ENCODE measurements at regions of chr19 and their contacts with region 1.

Region 1: DNA sequence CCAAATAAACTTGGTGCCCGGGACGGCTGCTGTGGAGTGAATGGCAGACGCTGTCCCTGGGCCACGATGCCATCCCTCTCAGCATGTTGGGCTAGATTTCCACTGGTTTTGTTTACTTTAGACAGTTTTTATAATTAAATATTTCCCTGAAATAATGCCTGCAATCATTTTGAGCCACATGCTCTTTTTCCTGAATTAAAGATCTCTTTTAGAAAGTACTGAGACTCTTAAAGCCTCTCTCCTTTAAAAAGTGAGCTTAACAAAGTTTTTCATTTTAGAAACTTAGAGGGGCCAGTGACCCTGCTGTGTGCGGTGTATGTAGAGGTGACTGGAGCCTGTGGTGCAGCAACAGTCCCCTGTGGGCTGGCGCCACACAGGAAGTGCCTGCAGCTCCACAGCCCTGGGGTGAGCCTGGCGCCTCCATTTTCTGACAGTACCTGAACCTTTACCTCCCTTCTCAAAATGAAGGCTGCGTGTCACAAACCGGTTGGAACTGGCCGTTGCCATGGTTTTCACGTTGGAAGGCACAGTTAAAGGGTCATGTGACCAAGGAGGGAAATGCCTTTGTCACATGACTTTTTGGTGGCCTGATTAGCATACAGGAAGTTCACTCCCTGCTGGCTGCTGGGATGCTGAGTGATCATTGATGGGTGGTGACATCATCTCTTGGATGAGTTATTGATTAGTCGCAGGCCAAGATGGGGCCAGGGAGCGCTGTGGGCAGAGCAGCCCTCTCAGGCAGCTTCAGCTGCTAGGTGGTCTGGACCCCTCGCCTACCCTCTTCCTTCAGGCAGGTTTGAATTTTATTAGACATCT is 26.3 kb downstream of the TSSK6 start:
- DNase-seq: peak; percentile 87
- H3K4me3 ChIP-seq: no peak overlapping the region
- H3K27ac ChIP-seq: peak overlapping the region; percentile 38
- H3K4me1 ChIP-seq: peaks cover 37% of the 10 kb centered on the region
- H3K27me3 ChIP-seq: no peaks in the 10 kb centered on the region
- CTCF ChIP-seq: no peak

Region 2: GRCh38 chr19:19145684-19146608 is 343.1 kb before region 1 on chr19:
- CTCF ChIA-PET with region 1: no interaction called
- dilution Hi-C with region 1: no loop called
- in situ Hi-C with region 1: loop called in 1 of 2 experiments (anchors 25 kb)
- intact Hi-C with region 1: loop called (anchors 1 kb)
- DNase-seq: peak; percentile 42
- H3K4me3 ChIP-seq: peak overlapping the region in 2 of 3 experiments; percentile 20 to 29
- H3K27ac ChIP-seq: no peak overlapping the region
- H3K4me1 ChIP-seq: peaks cover 2% of the 10 kb centered on the region
- H3K27me3 ChIP-seq: no peaks in the 10 kb centered on the region
- CTCF ChIP-seq: peak; percentile 92 to 96

Region 3: DNA sequence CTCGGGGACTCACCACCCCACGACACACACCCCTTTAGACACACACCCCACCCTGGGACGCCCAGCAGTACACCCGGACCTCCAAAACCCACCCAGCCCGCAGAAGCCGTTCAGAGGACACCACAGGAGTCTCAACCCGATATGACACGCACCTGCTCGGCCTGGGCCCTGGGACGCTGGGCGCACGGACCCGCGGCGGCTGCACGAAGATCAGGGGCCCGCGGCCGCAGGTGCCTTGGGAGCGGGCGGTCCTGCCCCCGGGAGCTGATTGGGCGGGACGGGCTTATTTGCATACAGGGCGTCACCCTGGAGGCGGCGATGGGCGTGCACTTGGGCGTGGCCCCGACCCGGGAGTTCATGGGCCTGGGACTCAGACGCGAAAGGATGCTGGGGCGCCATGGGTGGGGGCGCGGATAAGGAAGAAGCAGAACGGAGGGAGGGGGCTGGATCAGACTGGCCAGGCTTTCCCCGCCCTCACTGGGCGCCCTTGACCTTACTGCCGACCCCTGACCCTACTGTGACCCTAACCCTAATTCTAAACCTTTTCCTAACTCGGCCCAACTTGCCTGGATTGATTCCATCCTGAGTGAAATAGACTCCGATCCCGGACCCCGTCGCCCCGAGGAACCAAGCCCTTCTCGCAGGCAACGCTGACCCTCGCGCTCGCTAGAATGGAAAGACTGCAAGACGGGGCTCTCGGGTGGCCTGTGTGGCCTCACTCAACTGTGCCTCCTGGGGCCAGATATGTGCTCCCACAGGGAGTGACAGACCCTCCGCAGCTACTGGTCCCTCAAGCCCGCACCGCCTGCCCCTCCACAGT is 318.8 kb before region 1 on chr19 and contains the start of gene MEF2B:
- CTCF ChIA-PET with region 1: no interaction called
- dilution Hi-C with region 1: no loop called
- in situ Hi-C with region 1: loop called in 1 of 2 experiments (anchors 25 kb)
- intact Hi-C with region 1: no loop called
- DNase-seq: peak; percentile 27
- H3K4me3 ChIP-seq: no peak within 1 kb of the TSS
- H3K27ac ChIP-seq: no peak within 1 kb of the TSS
- H3K4me1 ChIP-seq: peaks cover 3% of the 10 kb centered on the region
- H3K27me3 ChIP-seq: no peaks in the 10 kb centered on the region
- CTCF ChIP-seq: no peak
- total RNA-seq, gene MEF2B: 0.68 TPM in 1 of 2 donors, not detected in the other

Region 4: DNA sequence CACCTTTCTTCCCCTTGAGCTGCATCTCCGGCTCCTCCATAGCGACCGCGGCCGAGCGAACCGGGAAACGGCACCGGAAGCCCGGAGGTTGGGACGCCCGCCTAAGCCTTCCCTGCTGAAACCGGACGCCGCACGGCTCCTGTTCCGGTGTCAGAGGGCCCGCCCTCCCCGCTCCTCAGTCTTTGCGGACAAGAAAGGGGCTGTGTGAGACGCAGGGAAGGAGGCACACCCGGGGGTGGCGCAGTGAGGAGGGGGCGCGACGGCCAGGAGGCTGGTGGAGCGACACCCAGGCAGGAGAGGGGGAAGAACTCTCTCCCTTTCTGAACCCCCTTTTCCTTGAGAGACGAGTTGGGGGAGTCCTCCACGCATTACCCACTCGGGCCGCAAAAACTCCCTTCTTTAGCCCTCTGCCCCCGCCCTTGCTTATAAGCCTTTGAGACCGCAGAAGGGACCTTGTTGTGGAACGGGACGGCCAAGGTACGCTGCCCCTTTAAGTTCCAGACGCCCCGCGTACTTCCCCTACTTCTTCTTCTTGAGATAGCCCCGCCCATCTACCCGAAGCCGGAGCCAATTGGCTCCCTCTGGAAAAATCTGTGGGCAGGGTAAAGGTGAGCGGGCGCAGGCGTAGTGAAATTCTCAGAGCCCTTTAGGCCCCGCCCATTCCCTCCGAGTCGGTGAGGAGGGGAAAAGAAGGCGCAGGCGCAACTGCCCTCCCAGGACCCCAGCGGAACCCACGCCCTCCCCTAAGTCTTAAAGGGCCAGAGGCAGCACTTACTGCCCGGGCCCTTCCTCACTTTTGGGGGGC is 296.8 kb before region 1 on chr19 and contains the starts of genes BORCS8 and RFXANK:
- CTCF ChIA-PET with region 1: no interaction called
- dilution Hi-C with region 1: no loop called
- in situ Hi-C with region 1: no loop called
- intact Hi-C with region 1: loop called (anchors 5 kb)
- DNase-seq: peak; percentile 98
- H3K4me3 ChIP-seq: peak within 1 kb of the TSS; percentile 80 to 94 (median 83)
- H3K27ac ChIP-seq: peak within 1 kb of the TSS; percentile 91
- H3K4me1 ChIP-seq: peaks cover 19% of the 10 kb centered on the region
- H3K27me3 ChIP-seq: no peaks in the 10 kb centered on the region
- CTCF ChIP-seq: no peak
- total RNA-seq, gene BORCS8: 13.3 to 35.1 TPM
- total RNA-seq, gene RFXANK: 66.8 to 100.0 TPM

Region 5: DNA sequence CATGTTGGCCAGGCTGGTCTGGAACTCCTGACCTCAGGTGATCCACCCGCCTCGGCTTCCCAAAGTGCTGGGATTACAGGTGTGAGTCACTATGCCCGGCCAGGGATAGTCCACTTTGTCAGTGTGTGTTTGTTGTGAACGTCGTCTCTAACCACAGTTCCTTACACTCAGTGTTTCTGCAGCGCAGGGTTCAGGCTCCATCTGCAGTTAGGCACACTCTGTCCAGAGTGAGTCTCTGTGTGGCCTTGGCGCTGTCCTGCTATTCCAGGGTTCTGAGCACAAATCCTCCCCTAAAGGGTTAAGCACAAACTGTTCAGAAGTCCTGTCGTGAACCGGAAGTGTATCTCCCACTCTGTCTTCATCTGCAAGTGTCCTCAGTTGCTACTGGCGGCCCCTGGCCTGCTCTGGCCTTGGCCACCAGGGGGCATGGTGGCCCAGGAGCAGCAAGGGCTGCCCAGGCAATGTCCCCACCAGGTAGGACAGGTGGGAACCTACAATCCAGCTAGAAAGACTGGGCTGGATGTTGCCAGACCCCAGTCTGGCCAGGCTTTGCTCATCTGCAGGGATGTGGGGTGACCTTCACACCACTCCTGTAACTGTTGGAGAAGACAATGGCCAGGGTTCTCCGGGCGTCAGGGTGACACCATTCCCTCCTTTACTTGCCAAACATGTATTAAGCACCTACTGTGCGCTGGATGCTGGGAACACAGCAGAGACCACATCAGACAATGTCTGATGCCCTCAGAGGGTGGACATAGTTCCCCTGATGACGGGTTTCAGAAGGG is 122.3 kb before region 1 on chr19:
- CTCF ChIA-PET with region 1: no interaction called
- dilution Hi-C with region 1: no loop called
- in situ Hi-C with region 1: loop called in 1 of 2 experiments (anchors 5 kb)
- intact Hi-C with region 1: loop called (anchors 1 kb)
- DNase-seq: peak; percentile 78
- H3K4me3 ChIP-seq: no peak overlapping the region
- H3K27ac ChIP-seq: no peak overlapping the region
- H3K4me1 ChIP-seq: peaks cover 8% of the 10 kb centered on the region
- H3K27me3 ChIP-seq: no peaks in the 10 kb centered on the region
- CTCF ChIP-seq: peak; percentile 97 to 98

Region 6: GRCh38 chr19:19385108-19385899 is 103.8 kb before region 1 on chr19:
- CTCF ChIA-PET with region 1: no interaction called
- dilution Hi-C with region 1: no loop called
- in situ Hi-C with region 1: no loop called
- intact Hi-C with region 1: loop called (anchors 5 kb)
- DNase-seq: peak; percentile 100
- H3K4me3 ChIP-seq: peak overlapping the region; percentile 84 to 85 (median 84)
- H3K27ac ChIP-seq: peak overlapping the region; percentile 31
- H3K4me1 ChIP-seq: peaks cover 27% of the 10 kb centered on the region
- H3K27me3 ChIP-seq: no peaks in the 10 kb centered on the region
- CTCF ChIP-seq: no peak

Region 7: DNA sequence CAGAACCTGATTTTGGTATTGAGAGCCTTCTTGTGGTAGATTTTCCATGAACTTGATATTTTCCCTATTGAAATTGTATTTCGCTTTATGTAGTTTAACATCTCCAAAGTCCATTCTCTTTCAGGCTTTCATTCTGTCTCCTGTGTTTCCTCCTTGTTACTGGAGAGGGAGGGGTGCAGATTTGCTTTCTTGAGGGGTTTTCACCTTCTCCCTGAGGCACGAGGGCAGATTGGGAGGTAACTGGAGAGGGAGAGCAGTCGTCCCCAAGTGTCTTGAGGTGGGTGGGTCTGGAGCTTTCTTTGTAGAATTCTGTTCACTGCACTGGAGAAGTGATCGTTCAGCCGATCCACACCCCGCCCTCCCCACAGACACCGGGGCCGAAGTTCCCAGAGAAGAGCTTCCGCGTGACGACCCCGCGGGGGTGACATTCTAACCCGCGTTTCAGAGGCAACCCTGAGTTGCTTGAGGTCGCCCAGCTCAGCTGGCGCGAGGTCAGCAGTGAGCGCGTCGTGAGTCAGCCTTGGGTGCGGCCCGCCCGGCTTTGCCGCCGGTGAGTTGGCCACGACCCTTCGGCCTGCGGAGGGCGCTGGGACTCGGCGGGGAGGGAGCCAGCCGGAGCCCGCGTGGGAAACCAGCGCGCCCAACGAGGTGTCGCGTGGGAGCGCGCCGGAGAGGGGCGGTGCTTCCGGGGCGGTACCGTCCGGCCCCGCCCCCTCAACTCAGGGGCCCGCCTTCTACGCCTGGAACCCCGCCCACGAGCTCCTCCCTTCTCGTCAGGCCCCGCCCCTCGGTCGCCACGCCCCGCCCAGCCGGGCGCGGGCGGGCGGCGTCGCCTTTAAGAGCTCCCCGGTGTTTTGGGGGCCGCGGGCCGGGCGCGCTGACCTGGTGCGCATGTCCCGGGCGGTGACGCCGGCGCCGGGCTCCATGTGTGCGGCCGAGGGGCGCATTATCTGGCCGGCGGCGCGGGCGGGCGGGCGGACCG is 83.9 kb before region 1 on chr19 and contains the start of gene GATAD2A:
- CTCF ChIA-PET with region 1: no interaction called
- dilution Hi-C with region 1: no loop called
- in situ Hi-C with region 1: no loop called
- intact Hi-C with region 1: loop called (anchors 1 kb)
- DNase-seq: peak; percentile 92
- H3K4me3 ChIP-seq: peak within 1 kb of the TSS; percentile 60 to 80 (median 67)
- H3K27ac ChIP-seq: peak within 1 kb of the TSS; percentile 48
- H3K4me1 ChIP-seq: peaks cover 47% of the 10 kb centered on the region
- H3K27me3 ChIP-seq: no peaks in the 10 kb centered on the region
- CTCF ChIP-seq: peak in 1 of 2 donors; percentile 48
- total RNA-seq, gene GATAD2A: 67.5 to 109 TPM

Region 8: DNA sequence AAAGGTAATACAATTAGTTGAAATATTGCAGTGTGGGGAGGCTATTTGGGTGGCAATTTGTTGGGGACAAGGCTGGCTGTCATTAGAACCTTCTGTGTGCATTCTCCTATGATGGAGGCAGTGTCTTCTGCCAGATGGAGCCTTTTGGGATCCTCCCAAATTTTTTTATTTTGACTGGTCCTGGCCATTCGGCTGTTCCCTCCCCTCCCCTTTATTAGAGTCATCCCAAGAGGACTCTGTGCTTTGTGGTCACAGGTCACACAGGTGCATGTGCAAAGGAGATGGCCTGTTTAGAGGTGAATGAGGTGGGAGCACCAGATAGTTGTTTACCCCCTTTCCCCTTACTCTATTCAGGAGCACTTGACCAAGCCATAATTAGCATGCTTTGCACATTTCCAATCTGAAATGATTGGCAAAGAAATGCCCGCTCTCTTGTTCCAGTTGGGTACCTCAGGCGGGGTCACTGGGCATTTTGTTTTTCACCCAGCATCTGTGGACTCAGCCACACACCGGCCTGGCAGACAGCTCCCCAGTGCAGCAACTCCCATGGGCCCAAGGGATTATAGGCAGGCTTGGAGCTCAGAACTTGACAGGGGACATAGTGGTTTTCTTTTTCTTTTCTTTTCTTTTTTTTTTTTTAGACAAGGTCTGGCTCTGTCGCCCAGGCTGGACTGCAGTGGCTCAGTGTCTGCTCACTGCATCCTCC is 63.8 kb before region 1 on chr19:
- CTCF ChIA-PET with region 1: no interaction called
- dilution Hi-C with region 1: no loop called
- in situ Hi-C with region 1: no loop called
- intact Hi-C with region 1: no loop called
- DNase-seq: no peak
- H3K4me3 ChIP-seq: no peak overlapping the region
- H3K27ac ChIP-seq: no peak overlapping the region
- H3K4me1 ChIP-seq: peaks cover 5% of the 10 kb centered on the region
- H3K27me3 ChIP-seq: no peaks in the 10 kb centered on the region
- CTCF ChIP-seq: no peak